Left colon (tissue), 2 donors: ENCODE measurements at regions of chr1 and their contacts with region 1.

Region 1: GRCh38 chr1:90964444-90965035 is 57.3 kb downstream of the ZNF644 start:
- DNase-seq: no peak
- ATAC-seq: peak; percentile 85

Region 2: DNA sequence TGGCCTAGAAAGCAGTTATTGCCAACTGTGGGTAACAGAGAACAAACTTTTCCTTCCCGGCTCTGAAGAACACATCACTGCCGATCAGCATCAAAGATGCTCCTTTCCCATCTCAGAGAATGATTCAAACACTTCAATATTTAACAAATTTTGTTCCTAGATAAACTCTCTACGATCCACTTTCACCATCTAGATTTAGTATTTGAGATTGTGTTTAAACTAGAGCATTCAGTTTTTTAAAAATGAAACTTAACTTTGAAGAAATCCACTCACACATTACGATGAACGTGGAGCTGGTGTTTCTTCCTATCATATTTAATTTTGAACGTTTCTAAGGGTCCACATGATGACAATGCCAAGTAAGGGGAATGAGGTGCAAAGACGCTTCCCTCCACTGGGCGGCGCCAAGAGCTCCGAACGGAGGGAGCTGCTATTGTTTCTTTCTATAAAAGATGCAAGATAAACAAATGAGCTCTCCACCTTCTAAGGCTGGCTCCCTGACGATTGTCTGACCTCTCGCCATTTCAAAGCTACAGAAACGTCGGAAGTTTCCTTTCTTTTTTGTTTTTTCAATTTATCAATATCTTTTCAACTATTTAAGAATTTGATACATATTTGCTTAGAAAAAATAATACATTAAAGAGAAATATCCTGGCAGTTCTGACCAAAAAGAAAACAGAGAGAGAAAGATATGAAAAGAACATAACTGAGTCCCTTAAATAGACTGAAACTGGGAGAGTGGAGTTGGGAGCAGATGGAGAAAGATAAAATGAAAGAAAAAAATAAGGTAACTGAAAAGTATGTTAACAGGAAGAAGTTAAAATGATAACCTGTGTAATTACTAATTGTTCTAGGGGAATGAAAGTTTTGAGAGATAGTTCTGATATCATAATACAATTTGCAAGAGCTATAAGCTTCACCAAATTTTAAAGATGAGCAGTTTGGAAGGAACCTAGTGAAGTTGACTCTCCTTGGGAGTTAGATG is 243.0 kb before region 1 on chr1:
- intact Hi-C with region 1: loop called in 1 of 2 experiments (anchors 10 kb)
- DNase-seq: peak in 1 of 2 donors; percentile 50
- ATAC-seq: peak; percentile 64

Region 3: DNA sequence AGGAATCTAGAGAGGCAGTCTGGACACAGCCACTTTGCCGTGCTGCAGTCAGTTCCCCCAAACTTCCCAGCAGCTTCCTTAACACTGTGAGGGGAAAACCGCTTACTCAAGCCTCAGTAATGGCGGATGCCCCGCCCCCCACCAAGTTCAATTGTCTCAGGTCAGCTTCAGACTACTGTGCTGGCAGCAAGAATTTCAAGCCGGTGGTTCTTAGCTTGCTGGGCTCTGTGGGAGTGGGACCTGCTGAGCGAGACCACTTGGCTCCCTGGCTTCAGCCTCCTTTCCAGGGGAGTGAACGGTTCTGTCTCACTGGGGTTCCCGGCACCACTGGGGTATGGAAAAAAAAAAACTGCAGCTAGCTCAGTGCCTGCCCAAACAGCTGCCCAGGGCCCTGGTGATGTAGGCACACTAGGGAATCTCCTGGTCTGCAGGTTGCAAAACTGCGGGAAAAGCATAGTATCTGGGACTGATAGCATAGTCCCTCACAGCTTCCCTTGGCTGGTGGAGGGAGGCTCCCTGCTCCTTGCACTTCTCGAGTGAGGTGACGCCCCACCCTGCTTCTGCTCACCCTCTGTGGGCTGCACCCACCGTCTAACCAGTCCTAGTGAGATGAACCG is 463.8 kb after region 1 on chr1:
- intact Hi-C with region 1: no loop called
- DNase-seq: no peak
- ATAC-seq: no peak